ENCODE measurements at regions of chr3 and their contacts with region 1.

Region 1: GRCh38 chr3:84692261-84692660 is 266.5 kb upstream of the CADM2 start:
- DNase-seq: no peak
- ATAC-seq: no peak
- H3K4me3 ChIP-seq: no peak overlapping the region
- H3K27ac ChIP-seq: no peak overlapping the region
- H3K4me1 ChIP-seq: no peaks in the 10 kb centered on the region
- H3K27me3 ChIP-seq: no peaks in the 10 kb centered on the region
- CTCF ChIP-seq: no peak
- POLR2A ChIP-seq: no peak
- RAD21 ChIP-seq: no peak

Region 2: DNA sequence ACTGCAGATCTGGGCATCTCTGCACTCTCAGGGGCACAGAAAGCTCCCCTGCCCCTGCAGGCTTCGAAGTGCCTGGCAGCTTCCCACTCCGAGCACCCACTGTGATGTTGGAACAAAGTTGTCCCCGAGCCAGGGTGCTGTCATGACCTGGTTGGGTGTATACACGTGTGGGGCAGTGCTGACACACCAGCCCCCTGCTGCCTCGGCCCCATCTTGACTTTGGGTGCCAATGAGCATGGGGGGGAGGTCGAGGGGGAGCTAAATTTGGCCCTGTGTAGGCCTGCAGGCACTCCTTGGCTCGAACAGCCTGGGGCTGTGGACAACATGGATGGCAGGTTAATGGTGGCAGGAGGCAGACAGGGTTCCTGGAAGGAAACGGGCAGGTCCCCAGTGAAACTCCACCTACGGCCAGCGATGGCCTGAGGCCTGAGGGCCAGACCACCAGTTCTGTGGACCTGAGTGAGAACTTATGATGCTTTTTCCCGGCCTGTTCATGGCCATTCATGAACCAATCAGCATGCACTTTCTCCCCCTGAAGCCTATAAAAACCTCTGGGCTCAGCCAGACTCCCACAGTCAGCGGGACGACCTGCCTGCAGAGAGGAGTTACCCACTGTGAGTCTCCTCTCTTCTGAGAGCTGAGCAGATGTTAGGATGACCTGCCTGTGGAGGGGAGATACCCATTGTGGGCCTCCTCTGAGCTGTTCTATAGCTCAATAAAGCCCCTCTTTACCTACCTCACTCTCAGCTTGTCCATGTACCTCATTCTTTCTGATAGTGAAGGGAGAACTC is 1901.8 kb before region 1 on chr3:
- CTCF ChIA-PET with region 1: no interaction called
- POLR2A ChIA-PET with region 1: no interaction called
- dilution Hi-C with region 1: no loop called
- in situ Hi-C with region 1: no loop called
- intact Hi-C with region 1: loop called (anchors 10 kb)
- DNase-seq: no peak
- ATAC-seq: no peak
- H3K4me3 ChIP-seq: no peak overlapping the region
- H3K27ac ChIP-seq: no peak overlapping the region
- H3K4me1 ChIP-seq: no peaks in the 10 kb centered on the region
- H3K27me3 ChIP-seq: no peaks in the 10 kb centered on the region
- CTCF ChIP-seq: no peak
- POLR2A ChIP-seq: no peak
- RAD21 ChIP-seq: no peak

Region 3: DNA sequence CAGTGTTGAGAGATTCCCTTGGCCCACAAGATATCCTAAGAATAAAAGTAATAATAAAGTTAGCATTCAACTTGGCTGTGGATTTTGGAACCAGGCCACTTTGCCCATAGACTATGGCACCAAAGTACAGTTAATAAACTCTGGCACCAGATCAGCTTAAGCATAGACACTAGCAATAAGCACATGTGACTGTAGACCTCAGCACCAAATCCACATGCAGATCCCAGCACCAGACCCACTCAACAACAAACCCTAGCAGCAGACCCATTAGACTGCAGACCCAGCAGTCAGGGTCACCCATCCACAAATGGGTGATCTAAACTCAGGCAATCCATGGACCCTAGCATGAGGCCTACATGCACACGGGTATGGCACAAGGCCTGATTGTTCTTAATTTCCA is 118.3 kb before region 1 on chr3:
- CTCF ChIA-PET with region 1: no interaction called
- POLR2A ChIA-PET with region 1: no interaction called
- dilution Hi-C with region 1: no loop called
- in situ Hi-C with region 1: no loop called
- intact Hi-C with region 1: no loop called
- DNase-seq: no peak
- ATAC-seq: no peak
- H3K4me3 ChIP-seq: no peak overlapping the region
- H3K27ac ChIP-seq: no peak overlapping the region
- H3K4me1 ChIP-seq: no peaks in the 10 kb centered on the region
- H3K27me3 ChIP-seq: no peaks in the 10 kb centered on the region
- CTCF ChIP-seq: no peak
- POLR2A ChIP-seq: no peak
- RAD21 ChIP-seq: no peak

Measured in IMR-90 (cell line).